ENCODE measurements at regions of chr10 and their contacts with region 1.

Region 1: GRCh38 chr10:10865303-10865702 is 152.4 kb upstream of the CELF2 start:
- DNase-seq: no peak
- H3K4me3 ChIP-seq: no peak overlapping the region
- H3K27ac ChIP-seq: no peak overlapping the region
- H3K4me1 ChIP-seq: peaks cover 0 to 9% of the 10 kb centered on the region in 2 donors
- H3K27me3 ChIP-seq: no peaks in the 10 kb centered on the region
- CTCF ChIP-seq: no peak

Region 2: GRCh38 chr10:10850214-10850613 is 15.1 kb before region 1 on chr10:
- intact Hi-C with region 1: loop called (anchors 2 kb)
- DNase-seq: no peak
- H3K4me3 ChIP-seq: no peak overlapping the region
- H3K27ac ChIP-seq: no peak overlapping the region
- H3K4me1 ChIP-seq: no peaks in the 10 kb centered on the region
- H3K27me3 ChIP-seq: no peaks in the 10 kb centered on the region
- CTCF ChIP-seq: no peak

Measured in ascending aorta (tissue), 2 donors.